IMR-90 (cell line): ENCODE measurements at regions of chr11 and their contacts with region 1.

Region 1: DNA sequence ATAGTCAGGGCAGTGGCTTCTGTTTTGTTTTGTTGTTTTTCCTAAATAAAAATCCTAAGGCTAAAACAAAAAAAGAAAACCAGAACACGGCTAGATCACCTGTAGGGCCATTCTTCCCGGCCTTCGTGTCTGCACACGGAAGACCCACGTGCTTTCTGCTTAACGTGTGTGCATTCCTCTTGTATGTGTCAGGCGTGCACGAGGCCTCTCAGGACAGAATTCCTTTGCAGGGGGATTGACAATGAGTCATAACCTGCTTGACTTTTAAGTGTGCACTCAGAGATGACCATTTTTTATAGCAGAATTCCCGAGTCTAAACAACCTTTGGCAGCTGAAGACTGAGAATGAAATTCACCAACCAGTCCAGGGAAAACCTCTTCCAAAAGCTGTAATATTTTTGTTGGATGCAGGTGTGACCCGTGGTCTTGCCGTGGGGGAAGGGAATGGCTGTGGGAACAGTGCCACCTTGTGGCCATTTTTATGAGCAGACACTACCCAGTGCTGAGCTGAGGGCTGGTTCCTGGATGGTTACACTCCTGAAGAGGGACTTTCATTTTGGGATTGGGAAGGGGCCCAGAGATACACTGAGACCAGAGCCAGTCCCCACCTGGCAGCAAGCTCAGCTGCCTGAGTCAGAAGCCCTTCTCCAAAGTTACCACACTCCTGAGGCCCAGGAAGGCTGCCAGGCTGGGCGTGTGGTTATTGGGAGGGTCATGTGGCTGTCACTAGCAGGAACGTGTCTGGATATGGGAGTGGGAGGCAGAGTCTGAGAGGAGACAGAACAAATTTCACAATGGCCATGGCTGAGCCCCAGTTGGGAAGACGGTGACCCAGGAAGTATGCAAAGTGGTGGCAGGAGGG is 35.8 kb upstream of the DKK3 start:
- DNase-seq: peak; percentile 100
- ATAC-seq: peak; percentile 75
- H3K4me3 ChIP-seq: 0 out of 2 replicates have a peak overlapping the region, but pooled peaks have one; percentile 2
- H3K27ac ChIP-seq: peak overlapping the region; percentile 88
- H3K4me1 ChIP-seq: peaks cover 22% of the 10 kb centered on the region
- H3K27me3 ChIP-seq: no peaks in the 10 kb centered on the region
- CTCF ChIP-seq: peak; percentile 90
- POLR2A ChIP-seq: peak; percentile 50; the same call in 1 of the 2 replicates
- RAD21 ChIP-seq: peak; percentile 93

Region 2: GRCh38 chr11:11798586-11799438 is 245.4 kb before region 1 on chr11:
- CTCF ChIA-PET with region 1: interaction called, 6 read pairs
- POLR2A ChIA-PET with region 1: no interaction called
- dilution Hi-C with region 1: no loop called
- in situ Hi-C with region 1: no loop called
- intact Hi-C with region 1: loop called (anchors 1 kb)
- DNase-seq: peak; percentile 78
- ATAC-seq: peak; percentile 99
- H3K4me3 ChIP-seq: no peak overlapping the region
- H3K27ac ChIP-seq: no peak overlapping the region
- H3K4me1 ChIP-seq: peaks cover 2% of the 10 kb centered on the region
- H3K27me3 ChIP-seq: peaks cover 10% of the 10 kb centered on the region
- CTCF ChIP-seq: peak; percentile 90
- POLR2A ChIP-seq: 0 out of 2 replicates have a peak, but pooled peaks have one; percentile 31
- RAD21 ChIP-seq: peak; percentile 87

Region 3: DNA sequence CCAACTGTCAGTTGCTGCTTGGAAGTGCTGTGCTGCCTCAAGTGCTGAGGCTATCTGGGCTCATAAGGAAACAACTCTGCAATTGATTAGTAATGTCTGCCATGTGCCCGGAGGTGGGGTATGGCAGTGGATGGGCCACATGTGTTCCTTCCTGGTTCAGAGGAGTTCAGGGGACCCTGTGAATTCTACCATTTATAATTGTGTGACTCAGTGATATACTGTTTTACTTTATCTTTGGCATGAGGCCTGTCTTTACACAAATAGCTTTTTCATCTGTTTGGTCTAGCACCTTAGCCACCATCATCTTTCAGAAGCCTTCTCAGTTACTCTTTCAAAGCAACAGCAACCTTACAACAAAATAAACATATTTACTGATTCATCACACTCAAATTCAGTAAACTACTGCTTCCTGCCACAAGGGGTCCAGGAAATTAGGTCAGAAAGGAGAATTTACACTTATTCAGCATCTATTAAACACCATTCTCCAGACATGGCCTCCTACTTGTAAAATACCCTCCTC is 56.6 kb before region 1 on chr11:
- CTCF ChIA-PET with region 1: no interaction called
- POLR2A ChIA-PET with region 1: no interaction called
- dilution Hi-C with region 1: no loop called
- in situ Hi-C with region 1: no loop called
- intact Hi-C with region 1: loop called (anchors 5 kb)
- DNase-seq: peak; percentile 78
- ATAC-seq: peak; percentile 46
- H3K4me3 ChIP-seq: no peak overlapping the region; the same call in 1 of the 2 replicates
- H3K27ac ChIP-seq: peak overlapping the region; percentile 57
- H3K4me1 ChIP-seq: peaks cover 42% of the 10 kb centered on the region
- H3K27me3 ChIP-seq: no peaks in the 10 kb centered on the region
- CTCF ChIP-seq: peak; percentile 52
- POLR2A ChIP-seq: no peak
- RAD21 ChIP-seq: peak; percentile 35

Region 4: DNA sequence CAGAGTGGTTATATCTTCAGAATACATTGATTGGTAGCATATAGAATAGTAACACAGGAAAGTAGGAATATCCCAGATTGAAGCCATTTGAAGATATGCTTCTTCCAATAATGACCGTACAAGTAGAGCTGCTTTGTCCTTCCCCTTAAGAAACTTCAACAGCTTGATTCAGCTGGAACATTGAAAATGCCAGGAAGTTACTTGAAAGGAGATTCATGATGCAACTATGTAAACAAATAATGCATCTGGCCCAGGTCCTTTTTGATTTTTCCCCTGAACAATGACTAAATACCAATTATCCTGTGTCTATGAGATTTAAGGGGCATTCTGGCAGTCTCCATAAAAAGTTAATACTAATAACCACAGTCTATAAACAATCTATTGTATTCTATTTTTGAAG is 38.7 kb before region 1 on chr11:
- CTCF ChIA-PET with region 1: no interaction called
- POLR2A ChIA-PET with region 1: no interaction called
- dilution Hi-C with region 1: no loop called
- in situ Hi-C with region 1: no loop called
- intact Hi-C with region 1: loop called (anchors 1 kb)
- DNase-seq: peak; percentile 89
- ATAC-seq: no peak
- H3K4me3 ChIP-seq: no peak overlapping the region; the same call in 1 of the 2 replicates
- H3K27ac ChIP-seq: peak overlapping the region; percentile 43; the same call in 1 of the 2 replicates
- H3K4me1 ChIP-seq: peaks cover 33% of the 10 kb centered on the region
- H3K27me3 ChIP-seq: no peaks in the 10 kb centered on the region
- CTCF ChIP-seq: no peak
- POLR2A ChIP-seq: no peak
- RAD21 ChIP-seq: no peak

Region 5: GRCh38 chr11:12087075-12088004 is 43.2 kb after region 1 on chr11:
- CTCF ChIA-PET with region 1: interaction called, 4 read pairs
- POLR2A ChIA-PET with region 1: interaction called, 3 read pairs
- dilution Hi-C with region 1: no loop called
- in situ Hi-C with region 1: no loop called
- intact Hi-C with region 1: loop called (anchors 1 kb)
- DNase-seq: peak; percentile 78
- ATAC-seq: peak; percentile 5; the same call in 1 of the 2 replicates
- H3K4me3 ChIP-seq: peak overlapping the region; percentile 46; the same call in 1 of the 2 replicates
- H3K27ac ChIP-seq: peak overlapping the region; percentile 97
- H3K4me1 ChIP-seq: peaks cover 36% of the 10 kb centered on the region
- H3K27me3 ChIP-seq: no peaks in the 10 kb centered on the region
- CTCF ChIP-seq: 0 out of 2 replicates have a peak, but pooled peaks have one; percentile 24
- POLR2A ChIP-seq: peak; percentile 81; the same call in 1 of the 2 replicates
- RAD21 ChIP-seq: no peak